Left colon (tissue), 2 donors: ENCODE measurements at regions of chr17 and their contacts with region 1.

Region 1: DNA sequence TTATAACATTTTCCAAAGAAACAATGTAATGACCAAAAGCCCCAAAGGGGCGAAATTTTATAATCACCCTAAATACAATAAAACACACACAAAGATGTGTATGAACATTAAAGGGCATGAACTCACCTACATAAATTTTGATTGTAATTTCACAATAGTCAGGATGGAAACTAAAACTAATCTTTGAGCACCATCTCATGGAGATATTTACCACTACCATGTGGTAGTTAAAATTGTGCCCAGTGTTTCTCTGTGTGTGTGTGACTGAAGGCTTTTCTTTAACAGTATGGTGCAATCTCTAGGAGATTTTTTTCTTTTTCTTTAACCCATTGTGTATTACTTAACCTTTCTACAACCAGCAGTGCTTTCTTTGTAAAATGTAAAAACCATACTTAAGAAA is 19.7 kb upstream of the MEIOC start:
- DNase-seq: no peak
- ATAC-seq: peak; percentile 39

Region 2: GRCh38 chr17:44230140-44230539 is 406.4 kb before region 1 on chr17:
- intact Hi-C with region 1: no loop called
- DNase-seq: no peak
- ATAC-seq: no peak

Region 3: GRCh38 chr17:44533533-44534246 is 102.9 kb before region 1 on chr17:
- intact Hi-C with region 1: loop called in 1 of 2 experiments (anchors 5 kb)
- DNase-seq: peak; percentile 73 to 92
- ATAC-seq: peak; percentile 84

Region 4: DNA sequence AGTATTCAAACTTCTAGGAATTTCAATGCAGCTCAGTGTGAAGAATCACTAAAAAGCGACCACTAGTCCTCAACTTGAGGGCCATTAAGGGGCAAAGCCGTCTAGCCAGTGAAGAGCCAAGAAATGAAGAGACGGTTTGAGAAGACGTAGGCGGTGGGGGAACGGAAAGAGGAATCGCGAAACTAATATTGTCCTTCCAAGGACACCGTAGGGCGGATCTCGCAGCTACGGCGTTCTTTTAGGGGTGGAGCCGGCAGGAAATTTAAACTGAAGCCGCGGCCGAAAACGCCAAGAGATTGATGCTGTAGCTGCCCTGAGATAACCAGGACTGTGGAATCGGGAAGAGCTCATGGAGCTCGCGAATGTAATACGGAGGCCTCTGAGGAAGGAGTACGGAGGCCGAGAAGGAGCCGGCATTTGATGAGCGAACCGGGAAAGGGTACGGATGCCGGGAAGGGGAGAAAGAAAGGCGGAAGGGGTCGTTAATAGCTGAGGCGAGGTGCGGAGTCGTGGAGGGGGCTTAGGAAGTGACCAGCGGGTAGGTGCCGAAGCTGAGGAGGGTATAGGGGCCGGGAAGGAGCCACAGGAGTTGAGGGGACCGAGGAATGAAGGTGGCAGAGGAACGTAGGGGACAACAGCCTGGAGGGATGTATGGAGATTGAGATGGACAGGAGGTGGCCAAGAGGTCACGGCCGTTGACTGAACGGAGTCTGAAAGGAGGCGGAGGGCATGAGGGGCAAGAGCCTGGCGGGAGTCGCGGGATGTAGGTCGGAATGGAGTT is 72.0 kb after region 1 on chr17 and contains the start of gene DBF4B:
- intact Hi-C with region 1: no loop called
- DNase-seq: peak; percentile 81 to 85
- ATAC-seq: peak; percentile 97
- total RNA-seq, gene DBF4B: 2.5 to 5.2 TPM